ENCODE measurements at regions of chr5 and their contacts with region 1.

Region 1: GRCh38 chr5:40679155-40679913 is 381 bp upstream of the PTGER4 start:
- DNase-seq: peak; percentile 96
- H3K4me3 Mint-ChIP-seq: peak overlapping the region; percentile 98
- H3K27ac Mint-ChIP-seq: peak overlapping the region; percentile 83
- H3K4me1 Mint-ChIP-seq: peaks cover 14% of the 10 kb centered on the region
- H3K27me3 Mint-ChIP-seq: no peaks in the 10 kb centered on the region
- CTCF ChIP-seq: no peak

Region 2: GRCh38 chr5:40486437-40487275 is 192.7 kb before region 1 on chr5:
- CTCF ChIA-PET with region 1: no interaction called
- intact Hi-C with region 1: loop called (anchors 2 kb)
- DNase-seq: peak; percentile 13
- H3K4me3 Mint-ChIP-seq: no peak overlapping the region
- H3K27ac Mint-ChIP-seq: no peak overlapping the region
- H3K4me1 Mint-ChIP-seq: peaks cover 11% of the 10 kb centered on the region
- H3K27me3 Mint-ChIP-seq: no peaks in the 10 kb centered on the region
- CTCF ChIP-seq: no peak

Region 3: GRCh38 chr5:40507095-40507494 is 172.2 kb before region 1 on chr5:
- CTCF ChIA-PET with region 1: no interaction called
- intact Hi-C with region 1: loop called (anchors 2 kb)
- DNase-seq: no peak
- H3K4me3 Mint-ChIP-seq: no peak overlapping the region
- H3K27ac Mint-ChIP-seq: no peak overlapping the region
- H3K4me1 Mint-ChIP-seq: no peaks in the 10 kb centered on the region
- H3K27me3 Mint-ChIP-seq: no peaks in the 10 kb centered on the region
- CTCF ChIP-seq: no peak

Region 4: DNA sequence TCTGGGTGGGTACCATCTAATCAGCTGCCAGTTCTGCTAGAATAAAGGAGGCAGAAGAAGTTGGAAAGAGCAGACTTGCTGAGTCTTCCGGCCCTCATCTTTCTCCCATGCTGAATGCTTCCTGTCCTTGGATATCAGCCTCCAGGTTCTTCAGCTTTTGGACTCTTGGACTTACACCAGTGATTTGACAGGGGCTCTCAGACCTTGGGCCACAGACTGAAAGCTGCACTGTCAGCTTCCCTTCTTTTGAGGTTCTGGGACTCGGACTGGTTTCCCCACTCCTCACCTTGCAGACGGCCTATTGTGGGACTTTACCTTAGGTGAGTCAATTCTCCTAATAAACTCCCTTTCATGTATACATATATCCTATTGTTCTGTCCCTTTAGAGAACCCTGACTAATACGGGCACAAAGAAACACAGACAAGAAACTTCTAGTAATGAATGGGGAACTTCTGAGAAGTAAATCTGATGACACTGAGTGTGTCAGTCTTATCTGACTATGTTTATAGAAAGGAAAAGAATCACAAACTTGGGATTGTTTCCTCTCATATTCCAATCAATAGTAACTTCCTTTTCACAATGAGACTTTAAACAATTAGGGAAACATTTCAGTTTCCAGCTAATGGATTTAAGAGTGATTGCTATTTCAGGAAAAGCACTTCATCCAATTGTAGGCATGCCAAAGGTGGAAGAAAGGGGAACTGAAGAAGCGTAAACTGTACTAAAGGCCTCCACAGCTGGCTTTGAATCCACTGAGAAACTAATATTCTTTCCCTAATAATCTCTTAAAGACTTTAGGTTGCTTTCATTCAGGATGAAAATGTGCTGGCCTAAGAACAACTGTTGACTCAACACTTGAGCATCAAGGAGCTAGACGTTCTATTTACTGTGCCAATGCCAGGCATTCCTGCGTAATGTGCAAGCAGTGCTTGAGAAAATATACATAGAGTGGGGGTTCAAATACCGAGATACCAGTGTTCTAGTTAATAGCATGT is 127.5 kb before region 1 on chr5:
- CTCF ChIA-PET with region 1: interaction called, 3 read pairs
- intact Hi-C with region 1: loop called (anchors 2 kb)
- DNase-seq: peak; percentile 53
- H3K4me3 Mint-ChIP-seq: peak overlapping the region; percentile 26
- H3K27ac Mint-ChIP-seq: peak overlapping the region; percentile 81
- H3K4me1 Mint-ChIP-seq: peaks cover 30% of the 10 kb centered on the region
- H3K27me3 Mint-ChIP-seq: no peaks in the 10 kb centered on the region
- CTCF ChIP-seq: no peak